Panc1 (cell line): ENCODE measurements at regions of chr2 and their contacts with region 1.

Region 1: DNA sequence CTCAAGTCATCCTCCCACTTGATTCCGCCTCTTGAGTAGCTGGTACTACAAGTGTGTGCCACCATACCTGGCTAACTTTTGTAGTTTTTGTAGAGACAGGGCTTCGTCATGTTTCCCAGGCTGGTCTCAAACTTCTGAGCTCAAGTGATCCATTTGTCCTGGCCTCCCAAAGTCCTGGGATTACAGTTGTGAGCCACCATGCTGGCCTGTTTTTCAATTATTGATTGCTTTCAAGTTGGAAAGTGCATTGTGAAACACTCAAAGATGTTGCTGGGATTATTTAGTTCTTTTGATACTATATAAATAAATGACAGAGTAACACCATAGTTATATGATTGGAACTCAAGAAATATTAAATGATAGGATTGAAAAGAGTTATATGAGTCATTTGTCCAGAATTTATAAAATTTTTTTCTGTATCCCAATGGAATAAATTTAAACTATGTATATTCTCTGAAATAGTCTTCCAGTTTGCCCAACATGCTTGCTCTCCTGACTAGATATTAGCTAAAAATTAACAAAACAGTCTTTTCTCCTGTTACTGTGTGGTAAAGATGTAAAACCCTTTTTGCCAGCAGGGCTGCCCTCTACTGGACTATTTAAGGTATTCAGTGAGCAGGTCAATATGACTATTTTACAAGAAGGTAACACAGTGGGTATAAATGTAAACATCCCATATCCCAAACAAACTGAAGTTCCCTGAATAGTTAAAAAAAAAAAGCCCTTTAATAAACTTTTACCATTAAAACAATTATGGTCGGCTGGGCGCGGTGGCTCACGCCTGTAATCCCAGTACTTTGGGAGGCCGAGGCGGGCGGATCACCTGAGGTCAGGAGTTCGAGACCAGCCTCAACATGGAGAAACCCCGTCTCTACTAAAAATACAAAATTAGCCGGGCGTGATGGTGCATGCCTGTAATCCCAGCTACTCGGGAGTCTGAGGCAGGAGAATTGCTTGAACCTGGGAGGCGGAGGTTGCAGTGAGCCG is 42.7 kb downstream of the ACSL3 start:
- DNase-seq: no peak
- ATAC-seq: peak; percentile 81
- H3K4me3 ChIP-seq: no peak overlapping the region
- H3K27ac ChIP-seq: no peak overlapping the region
- H3K4me1 ChIP-seq: peaks cover 16% of the 10 kb centered on the region
- H3K27me3 ChIP-seq: no peaks in the 10 kb centered on the region
- CTCF ChIP-seq: peak; percentile 80

Region 2: GRCh38 chr2:222690564-222691200 is 212.8 kb before region 1 on chr2:
- CTCF ChIA-PET with region 1: no interaction called
- POLR2A ChIA-PET with region 1: no interaction called
- in situ Hi-C with region 1: no loop called
- intact Hi-C with region 1: loop called (anchors 5 kb)
- DNase-seq: peak; percentile 55
- ATAC-seq: peak; percentile 94
- H3K4me3 ChIP-seq: no peak overlapping the region
- H3K27ac ChIP-seq: no peak overlapping the region
- H3K4me1 ChIP-seq: no peaks in the 10 kb centered on the region
- H3K27me3 ChIP-seq: no peaks in the 10 kb centered on the region; the same call in 1 of the 2 replicates
- CTCF ChIP-seq: peak; percentile 99

Region 3: DNA sequence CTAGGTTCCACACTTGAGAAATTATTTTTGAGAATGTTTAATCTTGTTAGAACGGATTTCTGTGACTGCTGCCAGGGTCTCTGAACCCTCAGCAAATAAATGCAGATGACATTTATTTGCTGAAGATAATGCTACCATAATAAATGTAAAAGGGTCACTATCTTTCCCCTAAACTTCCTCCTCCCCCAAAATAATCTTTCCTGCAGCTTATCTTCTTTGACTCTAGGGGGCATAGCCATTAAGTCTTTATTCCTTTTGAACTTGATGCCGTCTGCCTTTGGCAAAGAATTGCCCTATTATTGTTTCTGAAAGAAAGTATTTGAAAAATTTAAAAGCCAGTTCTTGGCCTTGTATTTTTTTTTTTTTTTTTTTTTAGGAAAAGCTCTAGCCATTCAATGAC is 106.3 kb before region 1 on chr2:
- CTCF ChIA-PET with region 1: no interaction called
- POLR2A ChIA-PET with region 1: no interaction called
- in situ Hi-C with region 1: no loop called
- intact Hi-C with region 1: loop called (anchors 2 kb)
- DNase-seq: no peak
- ATAC-seq: no peak
- H3K4me3 ChIP-seq: no peak overlapping the region
- H3K27ac ChIP-seq: no peak overlapping the region
- H3K4me1 ChIP-seq: no peaks in the 10 kb centered on the region
- H3K27me3 ChIP-seq: no peaks in the 10 kb centered on the region
- CTCF ChIP-seq: peak; percentile 52; the same call in 1 of the 2 replicates

Region 4: DNA sequence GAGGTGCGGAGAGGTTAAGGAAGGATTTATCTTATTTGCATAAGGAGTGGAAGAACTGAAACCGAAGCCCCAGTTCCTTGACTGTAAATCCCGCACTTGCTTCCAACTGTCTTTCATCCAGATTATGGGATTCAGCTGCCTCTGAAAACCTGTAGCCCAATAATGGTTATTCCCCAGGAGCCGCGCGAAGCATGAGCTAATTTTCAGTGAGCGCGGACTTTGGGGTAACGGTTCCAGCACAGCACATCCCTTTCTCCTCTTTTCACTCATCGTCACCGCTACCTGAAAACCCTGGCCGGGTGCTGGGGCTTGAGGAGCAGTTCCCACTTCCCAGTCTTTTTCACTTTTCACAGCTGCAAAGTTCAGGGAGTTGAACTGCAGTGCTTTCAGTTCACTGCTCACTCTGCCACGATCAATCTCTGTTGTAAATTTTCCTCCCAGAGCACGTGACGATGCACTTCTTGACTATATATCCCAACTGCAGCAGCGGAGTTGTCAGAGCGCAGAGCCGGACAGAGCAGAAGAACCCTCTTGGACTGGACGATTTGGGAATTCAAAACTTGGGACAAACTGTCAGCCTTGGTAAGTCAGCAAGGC is 148.3 kb after region 1 on chr2 and contains the start of gene KCNE4:
- CTCF ChIA-PET with region 1: no interaction called
- POLR2A ChIA-PET with region 1: no interaction called
- in situ Hi-C with region 1: no loop called
- intact Hi-C with region 1: no loop called
- DNase-seq: no peak
- ATAC-seq: peak; percentile 49
- H3K4me3 ChIP-seq: peak within 1 kb of the TSS; percentile 19 to 61
- H3K27ac ChIP-seq: no peak within 1 kb of the TSS
- H3K4me1 ChIP-seq: no peaks in the 10 kb centered on the region
- H3K27me3 ChIP-seq: no peaks in the 10 kb centered on the region
- CTCF ChIP-seq: no peak
- total RNA-seq, gene KCNE4: 0.21 TPM